RWPE1 (cell line): ENCODE measurements at regions of chr20 and their contacts with region 1.

Region 1: GRCh38 chr20:35254447-35254999 is 23.4 kb downstream of the MMP24OS start:
- DNase-seq: no peak
- H3K27ac ChIP-seq: no peak overlapping the region
- CTCF ChIP-seq: no peak

Region 2: GRCh38 chr20:35165221-35166185 is 89.0 kb before region 1 on chr20:
- CTCF ChIA-PET with region 1: no interaction called
- POLR2A ChIA-PET with region 1: interaction called, 11 read pairs
- DNase-seq: no peak
- H3K27ac ChIP-seq: no peak overlapping the region
- CTCF ChIP-seq: no peak

Region 3: DNA sequence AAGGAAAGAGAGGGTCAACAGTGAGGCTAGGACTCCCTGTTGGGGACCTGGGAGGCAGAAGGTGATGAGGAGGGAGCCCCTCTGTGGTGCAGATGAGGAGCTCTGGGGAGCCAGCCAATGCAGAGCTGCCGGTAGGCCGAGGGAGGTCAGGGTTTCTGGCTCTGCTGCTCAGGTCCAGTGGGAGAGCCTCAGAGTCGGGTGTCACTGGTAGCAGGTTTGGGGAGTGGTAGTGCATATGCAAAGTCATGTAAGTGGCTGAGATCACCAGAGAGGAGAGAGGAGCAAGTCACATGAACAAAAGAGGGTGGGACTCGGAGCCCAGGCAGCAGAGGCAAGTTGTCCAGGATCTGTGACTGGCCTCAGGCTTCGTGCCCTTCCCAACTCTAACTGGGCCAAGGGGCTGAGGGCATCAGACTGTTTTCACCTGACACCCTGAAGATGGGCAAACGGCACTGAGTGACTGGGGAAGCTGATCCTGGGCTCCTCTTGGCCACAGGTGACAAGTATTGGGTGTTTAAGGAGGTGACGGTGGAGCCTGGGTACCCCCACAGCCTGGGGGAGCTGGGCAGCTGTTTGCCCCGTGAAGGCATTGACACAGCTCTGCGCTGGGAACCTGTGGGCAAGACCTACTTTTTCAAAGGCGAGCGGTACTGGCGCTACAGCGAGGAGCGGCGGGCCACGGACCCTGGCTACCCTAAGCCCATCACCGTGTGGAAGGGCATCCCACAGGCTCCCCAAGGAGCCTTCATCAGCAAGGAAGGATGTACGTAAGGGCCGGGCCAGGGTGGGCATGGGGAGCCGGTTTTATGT is 16.8 kb after region 1 on chr20:
- CTCF ChIA-PET with region 1: no interaction called
- POLR2A ChIA-PET with region 1: no interaction called
- DNase-seq: no peak
- H3K27ac ChIP-seq: peak overlapping the region; percentile 24
- CTCF ChIP-seq: no peak